PC-9 (cell line): ENCODE measurements at regions of chr2 and their contacts with region 1.

Region 1: GRCh38 chr2:231463698-231464575 is at the start of gene NCL:
- DNase-seq: peak; percentile 79 to 87
- H3K4me3 ChIP-seq: peak within 1 kb of the TSS; percentile 99
- H3K27ac ChIP-seq: peak within 1 kb of the TSS; percentile 99
- H3K4me1 ChIP-seq: peaks cover 24% of the 10 kb centered on the region
- H3K27me3 ChIP-seq: no peaks in the 10 kb centered on the region
- CTCF ChIP-seq: no peak
- total RNA-seq, gene NCL: 450 and 557 TPM in 2 replicates

Region 2: DNA sequence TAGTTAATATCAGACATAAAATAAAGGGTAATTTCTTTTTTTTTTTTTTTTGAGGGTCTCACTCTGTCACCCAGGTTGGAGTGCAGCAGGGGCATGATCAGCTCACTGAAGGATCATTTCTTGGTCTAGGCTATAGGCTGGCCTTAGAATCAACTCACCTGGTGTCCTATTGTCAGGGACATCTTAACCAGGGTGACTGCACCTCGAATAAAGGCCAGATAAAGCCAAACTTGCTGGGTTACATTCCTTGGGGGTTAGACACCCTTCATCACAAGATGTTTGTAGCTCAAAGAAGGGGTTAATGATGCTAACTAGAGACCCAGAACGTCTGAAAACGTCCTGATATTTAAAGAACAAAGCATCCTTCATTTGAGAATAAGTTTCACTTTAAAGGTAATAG is 450.1 kb before region 1 on chr2:
- CTCF ChIA-PET with region 1: no interaction called
- POLR2A ChIA-PET with region 1: interaction called, 15 read pairs
- intact Hi-C with region 1: no loop called
- DNase-seq: peak in 1 of 2 experiments; percentile 80
- H3K4me3 ChIP-seq: no peak overlapping the region
- H3K27ac ChIP-seq: no peak overlapping the region
- H3K4me1 ChIP-seq: peaks cover 35% of the 10 kb centered on the region
- H3K27me3 ChIP-seq: no peaks in the 10 kb centered on the region; the same call in 1 of the 2 replicates
- CTCF ChIP-seq: no peak

Region 3: GRCh38 chr2:231139796-231140195 is 324.1 kb before region 1 on chr2:
- CTCF ChIA-PET with region 1: interaction called, 13 read pairs
- POLR2A ChIA-PET with region 1: no interaction called
- intact Hi-C with region 1: no loop called
- DNase-seq: no peak
- H3K4me3 ChIP-seq: no peak overlapping the region
- H3K27ac ChIP-seq: no peak overlapping the region
- H3K4me1 ChIP-seq: no peaks in the 10 kb centered on the region
- H3K27me3 ChIP-seq: no peaks in the 10 kb centered on the region
- CTCF ChIP-seq: no peak

Region 4: GRCh38 chr2:231378026-231378722 is 85.8 kb before region 1 on chr2:
- CTCF ChIA-PET with region 1: no interaction called
- POLR2A ChIA-PET with region 1: interaction called, 13 read pairs
- intact Hi-C with region 1: no loop called
- DNase-seq: peak; percentile 72 to 84
- H3K4me3 ChIP-seq: no peak overlapping the region
- H3K27ac ChIP-seq: peak overlapping the region; percentile 68
- H3K4me1 ChIP-seq: peaks cover 53% of the 10 kb centered on the region
- H3K27me3 ChIP-seq: no peaks in the 10 kb centered on the region
- CTCF ChIP-seq: no peak